H1 (cell line): ENCODE measurements at regions of chr2 and their contacts with region 1.

Region 1: GRCh38 chr2:216081487-216082116 is at the starts of genes PECR and TMEM169:
- DNase-seq: peak in 1 of 2 experiments; percentile 91
- H3K4me3 ChIP-seq: peak within 1 kb of the TSS; percentile 53 to 92 (median 81)
- H3K27ac ChIP-seq: peak within 1 kb of the TSS; percentile 37; the same call in 1 of the 2 replicates
- H3K4me1 ChIP-seq: peaks cover 3 to 15% (median 14%) of the 10 kb centered on the region in 4 experiments; a peak in 5 of 7 replicates
- H3K27me3 ChIP-seq: no peaks in the 10 kb centered on the region
- CTCF ChIP-seq: peak in 1 of 3 experiments; percentile 0; a peak in 1 of 4 replicates
- EP300 ChIP-seq: no peak
- POLR2A ChIP-seq: peak; percentile 63 to 71
- RAD21 ChIP-seq: no peak
- total RNA-seq, gene PECR: 17.5 and 19.2 TPM in 2 replicates
- total RNA-seq, gene TMEM169: 2.4 and 2.5 TPM in 2 replicates

Region 2: GRCh38 chr2:216051350-216051749 is 30.3 kb before region 1 on chr2:
- CTCF ChIA-PET with region 1: interaction called, 4 read pairs
- POLR2A ChIA-PET with region 1: interaction called, 10 read pairs
- DNase-seq: no peak
- H3K4me3 ChIP-seq: no peak overlapping the region
- H3K27ac ChIP-seq: no peak overlapping the region
- H3K4me1 ChIP-seq: peaks cover 0 to 8% (median under 1%) of the 10 kb centered on the region in 4 experiments; a peak in 1 of 7 replicates
- H3K27me3 ChIP-seq: no peaks in the 10 kb centered on the region
- CTCF ChIP-seq: no peak
- EP300 ChIP-seq: no peak
- POLR2A ChIP-seq: no peak
- RAD21 ChIP-seq: no peak

Region 3: GRCh38 chr2:216092646-216093045 is 11.0 kb after region 1 on chr2:
- CTCF ChIA-PET with region 1: interaction called, 6 read pairs
- POLR2A ChIA-PET with region 1: interaction called, 27 read pairs
- DNase-seq: no peak
- H3K4me3 ChIP-seq: no peak overlapping the region
- H3K27ac ChIP-seq: no peak overlapping the region
- H3K4me1 ChIP-seq: no peaks in the 10 kb centered on the region
- H3K27me3 ChIP-seq: no peaks in the 10 kb centered on the region
- CTCF ChIP-seq: no peak
- EP300 ChIP-seq: no peak
- POLR2A ChIP-seq: no peak
- RAD21 ChIP-seq: no peak

Region 4: DNA sequence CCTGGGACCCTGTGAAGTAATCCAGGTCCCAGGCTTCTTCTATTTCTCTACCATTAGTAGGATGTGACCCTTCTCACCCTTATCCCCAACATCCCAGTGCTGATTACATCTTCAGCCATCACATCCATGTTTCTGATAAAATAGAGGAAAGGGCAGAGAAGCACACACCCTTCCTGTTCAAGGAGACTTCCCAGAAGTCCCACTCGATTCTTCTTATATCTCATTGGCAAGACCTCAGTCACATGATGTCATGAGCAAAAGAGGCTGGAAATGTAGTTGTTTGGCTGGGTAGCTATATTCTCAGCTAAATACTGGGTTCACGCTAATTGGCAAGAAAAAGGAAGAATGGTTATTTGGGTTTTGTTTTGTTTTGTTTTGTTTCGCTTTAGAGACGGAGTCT is 19.5 kb after region 1 on chr2:
- CTCF ChIA-PET with region 1: interaction called, 4 read pairs
- POLR2A ChIA-PET with region 1: interaction called, 10 read pairs
- DNase-seq: no peak
- H3K4me3 ChIP-seq: no peak overlapping the region
- H3K27ac ChIP-seq: no peak overlapping the region
- H3K4me1 ChIP-seq: no peaks in the 10 kb centered on the region
- H3K27me3 ChIP-seq: no peaks in the 10 kb centered on the region
- CTCF ChIP-seq: no peak
- EP300 ChIP-seq: no peak
- POLR2A ChIP-seq: no peak
- RAD21 ChIP-seq: no peak

Region 5: GRCh38 chr2:216108967-216109921 is 27.6 kb after region 1 on chr2 and contains the start of gene XRCC5:
- CTCF ChIA-PET with region 1: interaction called, 18 read pairs
- POLR2A ChIA-PET with region 1: interaction called, 73 read pairs
- DNase-seq: peak; percentile 98
- H3K4me3 ChIP-seq: peak within 1 kb of the TSS; percentile 87 to 99 (median 97)
- H3K27ac ChIP-seq: peak within 1 kb of the TSS; percentile 92
- H3K4me1 ChIP-seq: peaks cover 4 to 12% (median 10%) of the 10 kb centered on the region in 4 experiments; a peak in 6 of 7 replicates
- H3K27me3 ChIP-seq: no peaks in the 10 kb centered on the region
- CTCF ChIP-seq: no peak
- EP300 ChIP-seq: no peak; a peak in 1 of 3 replicates
- POLR2A ChIP-seq: peak; percentile 65 to 77
- RAD21 ChIP-seq: no peak
- total RNA-seq, gene XRCC5: 597 and 644 TPM in 2 replicates

Region 6: GRCh38 chr2:216114714-216115557 is 33.3 kb after region 1 on chr2:
- CTCF ChIA-PET with region 1: interaction called, 18 read pairs
- POLR2A ChIA-PET with region 1: interaction called, 73 read pairs
- DNase-seq: peak; percentile 98 to 99
- H3K4me3 ChIP-seq: peak overlapping the region in 3 of 4 experiments; percentile 17 to 56 (median 24); a peak in 4 of 8 replicates
- H3K27ac ChIP-seq: peak overlapping the region; percentile 92
- H3K4me1 ChIP-seq: peaks cover 6 to 15% (median 10%) of the 10 kb centered on the region in 4 experiments; a peak in 6 of 7 replicates
- H3K27me3 ChIP-seq: no peaks in the 10 kb centered on the region
- CTCF ChIP-seq: peak; percentile 68 to 93 (median 75)
- EP300 ChIP-seq: no peak
- POLR2A ChIP-seq: peak; percentile 70 to 89
- RAD21 ChIP-seq: no peak; a peak in 1 of 4 replicates

Region 7: DNA sequence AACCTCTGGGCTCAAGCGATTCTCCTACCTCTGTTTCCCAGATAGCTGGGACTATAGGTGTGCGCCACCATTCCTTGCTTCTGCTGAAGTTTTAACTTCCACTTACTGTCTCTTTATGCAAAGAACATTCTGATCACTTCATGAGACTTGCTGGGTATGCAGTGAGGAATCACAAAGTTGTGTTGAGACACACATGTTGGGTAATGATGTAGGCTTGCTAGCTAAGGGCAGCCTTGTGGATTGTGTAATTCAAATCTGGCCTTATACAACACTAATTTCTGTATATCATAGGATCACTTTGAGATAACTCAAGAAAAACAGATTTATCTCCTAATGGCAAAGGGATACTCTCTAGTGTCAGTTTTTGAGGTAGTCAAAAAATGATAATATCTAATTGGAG is 51.8 kb after region 1 on chr2:
- CTCF ChIA-PET with region 1: no interaction called
- POLR2A ChIA-PET with region 1: no interaction called
- DNase-seq: no peak
- H3K4me3 ChIP-seq: no peak overlapping the region
- H3K27ac ChIP-seq: no peak overlapping the region
- H3K4me1 ChIP-seq: no peaks in the 10 kb centered on the region
- H3K27me3 ChIP-seq: no peaks in the 10 kb centered on the region
- CTCF ChIP-seq: no peak
- EP300 ChIP-seq: no peak
- POLR2A ChIP-seq: no peak
- RAD21 ChIP-seq: no peak

Region 8: DNA sequence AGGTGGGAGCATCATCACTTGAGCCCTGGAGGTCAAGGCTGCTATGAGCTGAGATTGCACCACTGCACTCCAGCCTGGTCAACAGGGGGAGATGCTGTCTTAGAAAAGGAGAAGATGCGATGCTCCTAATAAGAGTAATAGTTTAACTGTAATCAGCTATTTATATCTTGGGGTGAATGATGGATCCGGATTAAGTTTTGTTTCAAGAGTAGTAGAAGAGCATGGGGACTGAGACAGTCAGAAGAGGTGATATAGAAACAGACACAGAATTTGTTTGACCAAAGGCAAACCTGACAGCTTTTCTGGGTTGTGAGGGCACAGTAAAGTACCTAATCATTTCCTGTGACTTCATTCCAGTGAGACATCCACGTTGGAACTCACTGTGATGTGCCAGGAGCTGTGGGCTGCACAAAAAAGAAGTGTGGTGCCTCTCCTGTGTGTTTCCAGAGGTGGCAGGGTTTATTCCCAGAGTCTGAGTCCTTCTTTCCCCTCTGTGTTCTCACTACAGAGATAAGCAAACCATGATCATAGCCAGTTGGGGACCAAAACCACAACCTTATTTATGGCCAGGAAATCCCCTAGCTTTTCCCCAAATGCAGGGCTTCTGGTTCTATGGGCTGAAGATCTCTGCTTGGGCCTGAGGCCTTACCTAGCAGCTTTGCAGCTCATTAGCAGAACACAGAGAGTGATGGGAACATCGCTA is 141.2 kb after region 1 on chr2:
- CTCF ChIA-PET with region 1: no interaction called
- POLR2A ChIA-PET with region 1: no interaction called
- DNase-seq: no peak
- H3K4me3 ChIP-seq: no peak overlapping the region
- H3K27ac ChIP-seq: no peak overlapping the region
- H3K4me1 ChIP-seq: no peaks in the 10 kb centered on the region
- H3K27me3 ChIP-seq: no peaks in the 10 kb centered on the region
- CTCF ChIP-seq: peak; percentile 71 to 77 (median 76)
- EP300 ChIP-seq: no peak
- POLR2A ChIP-seq: no peak
- RAD21 ChIP-seq: peak; percentile 87